Ovary (tissue), 10 donors: ENCODE measurements at regions of chr3 and their contacts with region 1.

Region 1: GRCh38 chr3:171646357-171647133 is 163.7 kb downstream of the PLD1 start:
- DNase-seq: no peak
- H3K4me3 ChIP-seq: no peak overlapping the region
- H3K27ac ChIP-seq: peak overlapping the region; percentile 36 to 69
- H3K4me1 ChIP-seq: peaks cover 5% of the 10 kb centered on the region
- H3K27me3 ChIP-seq: no peaks in the 10 kb centered on the region
- CTCF ChIP-seq: peak; percentile 12 to 74 (median 68)
- EP300 ChIP-seq: no peak
- POLR2A ChIP-seq: no peak

Region 2: GRCh38 chr3:171772427-171773056 is 126.0 kb after region 1 on chr3:
- intact Hi-C with region 1: loop called (anchors 2 to 10 kb)
- DNase-seq: peak; percentile 59 to 79 (median 68)
- H3K4me3 ChIP-seq: no peak overlapping the region
- H3K27ac ChIP-seq: peak overlapping the region in 1 of 2 donors; percentile 76
- H3K4me1 ChIP-seq: peaks cover 7% of the 10 kb centered on the region
- H3K27me3 ChIP-seq: no peaks in the 10 kb centered on the region
- CTCF ChIP-seq: peak; percentile 57 to 66 (median 63)
- EP300 ChIP-seq: no peak
- POLR2A ChIP-seq: no peak

Region 3: DNA sequence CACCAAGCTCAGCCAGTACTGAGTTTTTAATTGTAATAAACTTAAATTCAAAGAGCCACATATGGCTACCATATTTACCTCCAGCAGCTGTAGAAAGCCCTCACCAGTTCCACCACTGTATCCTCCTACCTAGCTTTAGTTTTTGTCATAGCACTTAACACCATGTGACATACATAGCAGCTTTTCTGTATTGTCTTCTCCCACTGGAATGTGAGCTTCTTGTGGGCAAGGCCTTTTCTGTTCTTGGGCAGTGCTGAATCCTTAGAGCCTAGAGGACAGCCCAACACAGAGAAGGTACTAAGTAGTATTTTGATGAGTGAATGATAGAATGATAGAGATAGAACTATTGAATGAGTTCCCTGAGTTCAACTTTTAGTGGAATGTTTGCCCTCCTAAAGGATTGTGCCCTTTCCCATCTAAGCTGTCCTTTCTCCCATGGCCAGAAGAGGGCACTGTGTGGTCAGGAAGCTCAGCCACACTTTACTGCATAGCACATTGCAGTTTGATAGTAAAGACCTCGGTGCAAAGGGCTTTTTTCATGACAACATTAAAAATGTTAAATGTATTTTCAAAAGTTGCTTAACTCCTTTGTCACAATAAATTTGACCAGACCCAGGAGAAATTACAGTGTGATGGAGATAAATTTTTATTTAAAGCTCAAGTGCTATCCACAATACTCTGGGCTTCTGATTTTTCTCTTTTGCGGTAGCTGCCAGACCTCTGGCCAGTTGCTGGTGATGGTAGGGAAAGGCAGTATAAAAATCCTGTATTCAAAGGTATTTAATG is 685.9 kb after region 1 on chr3:
- intact Hi-C with region 1: loop called in 1 of 4 experiments (anchors 10 kb)
- DNase-seq: peak in 4 of 5 donors; percentile 49 to 81 (median 69)
- H3K4me3 ChIP-seq: no peak overlapping the region
- H3K27ac ChIP-seq: peak overlapping the region in 1 of 2 donors; percentile 26
- H3K4me1 ChIP-seq: peaks cover 3% of the 10 kb centered on the region
- H3K27me3 ChIP-seq: no peaks in the 10 kb centered on the region
- CTCF ChIP-seq: peak; percentile 67 to 88 (median 83)
- EP300 ChIP-seq: no peak
- POLR2A ChIP-seq: no peak